ENCODE measurements at regions of chr19 and their contacts with region 1.

Region 1: DNA sequence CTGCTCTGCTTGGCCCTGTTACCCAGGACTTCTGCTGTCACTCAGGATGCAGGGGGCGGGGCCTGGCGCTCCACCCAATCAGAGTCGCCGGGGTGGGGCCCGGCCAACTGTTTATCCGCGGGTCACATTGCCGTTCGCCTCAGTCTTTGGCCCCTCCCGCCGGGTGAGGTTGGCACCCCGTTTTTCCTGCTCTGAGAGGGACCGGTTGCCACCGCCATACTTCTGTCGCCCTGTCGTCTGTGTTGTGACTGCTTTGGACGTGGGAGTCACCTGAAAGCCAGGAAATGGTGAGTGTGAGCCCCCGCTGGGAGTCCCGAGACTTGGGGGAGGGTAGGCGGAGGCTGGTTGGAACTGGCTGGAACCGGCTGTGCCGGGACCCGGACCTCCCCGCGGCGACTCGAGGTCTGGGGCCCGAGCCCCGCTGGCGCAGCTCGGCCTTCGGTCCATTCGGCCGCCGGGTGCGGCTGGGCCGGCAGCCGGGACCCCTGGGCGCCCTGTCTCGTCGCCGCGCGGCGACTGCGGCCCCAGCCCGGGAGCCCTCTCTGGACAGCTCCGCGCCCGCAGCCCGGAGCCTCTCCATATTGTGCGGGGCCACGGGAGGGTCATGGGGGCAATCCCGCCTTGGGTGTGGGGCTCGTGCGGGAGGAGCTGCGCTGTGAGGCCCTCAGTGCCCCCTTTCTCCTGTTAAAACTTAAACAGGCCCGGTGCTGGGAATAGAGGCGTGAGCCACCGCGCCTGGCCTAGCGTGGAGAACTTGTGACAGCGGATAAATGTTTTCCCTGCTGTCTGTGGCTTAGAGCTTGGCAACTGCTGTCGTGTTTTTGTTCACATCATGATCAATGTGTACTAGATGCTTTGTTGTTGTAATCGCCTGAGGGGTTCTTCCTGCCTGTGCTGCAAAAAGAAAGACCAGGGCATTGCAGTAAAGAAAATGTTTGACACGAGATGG is at the start of gene ZNF844:
- DNase-seq: peak; percentile 95 to 98
- H3K4me3 ChIP-seq: peak within 1 kb of the TSS; percentile 84 to 85
- H3K27ac ChIP-seq: peak within 1 kb of the TSS; percentile 87 to 93
- H3K4me1 ChIP-seq: peaks cover 3 to 7% of the 10 kb centered on the region in 2 donors
- H3K27me3 ChIP-seq: no peaks in the 10 kb centered on the region
- CTCF ChIP-seq: no peak
- total RNA-seq, gene ZNF844: 8.0 TPM

Region 2: DNA sequence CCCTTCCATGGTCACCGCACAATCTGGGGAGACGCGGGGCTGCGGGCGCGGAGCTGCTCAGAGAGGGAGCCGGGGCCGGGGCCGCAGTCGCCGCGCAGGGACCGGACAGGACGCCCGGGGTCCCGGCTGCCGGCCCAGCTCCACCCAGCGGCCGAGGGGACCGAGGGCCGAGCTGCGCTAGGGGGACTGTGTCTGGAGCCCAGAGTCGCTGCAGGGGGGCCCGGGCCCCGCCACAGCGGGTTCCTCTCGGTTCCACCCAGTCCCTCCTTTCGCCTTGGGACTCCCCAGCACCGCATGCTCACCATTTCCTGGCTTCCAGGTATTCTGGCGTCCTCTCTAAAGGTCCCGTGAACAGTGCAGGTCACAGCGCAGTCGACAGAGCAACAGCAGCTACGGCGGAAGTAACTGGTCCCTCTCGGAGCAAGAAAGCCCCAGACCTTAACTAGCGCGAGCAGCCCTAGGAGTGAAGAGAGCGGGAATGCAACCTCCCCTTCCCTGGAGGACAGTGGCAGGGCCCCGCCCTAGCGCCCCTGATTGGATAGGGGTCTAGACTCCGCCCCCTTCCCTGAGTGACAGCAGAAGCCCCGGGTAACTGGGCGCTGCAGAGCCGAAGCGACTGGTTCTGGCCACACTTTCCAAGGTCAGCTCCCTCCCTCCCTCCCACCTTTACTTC is 12.2 kb before region 1 on chr19 and contains the start of gene ZNF878:
- intact Hi-C with region 1: loop called (anchors 1 kb)
- DNase-seq: peak; percentile 63 to 93
- H3K4me3 ChIP-seq: peak within 1 kb of the TSS; percentile 77 to 83
- H3K27ac ChIP-seq: peak within 1 kb of the TSS; percentile 59 to 65
- H3K4me1 ChIP-seq: peaks cover 0 to 2% of the 10 kb centered on the region in 2 donors
- H3K27me3 ChIP-seq: no peaks in the 10 kb centered on the region
- CTCF ChIP-seq: peak in 2 of 3 experiments; percentile 7 to 11
- total RNA-seq, gene ZNF878: not detected

Region 3: GRCh38 chr19:12365236-12366162 is 300.6 kb after region 1 on chr19 and contains the start of gene ZNF442:
- intact Hi-C with region 1: loop called (anchors 10 kb)
- DNase-seq: peak; percentile 84 to 98
- H3K4me3 ChIP-seq: peak within 1 kb of the TSS; percentile 79 to 91
- H3K27ac ChIP-seq: peak within 1 kb of the TSS; percentile 90 to 94
- H3K4me1 ChIP-seq: peaks cover 0 to 3% of the 10 kb centered on the region in 2 donors
- H3K27me3 ChIP-seq: no peaks in the 10 kb centered on the region
- CTCF ChIP-seq: peak; percentile 63 to 75 (median 65)
- total RNA-seq, gene ZNF442: 0.21 TPM

Measured in ascending aorta (tissue), 2 donors.